CD14-positive monocyte (primary cell): ENCODE measurements at regions of chr4 and their contacts with region 1.

Region 1: DNA sequence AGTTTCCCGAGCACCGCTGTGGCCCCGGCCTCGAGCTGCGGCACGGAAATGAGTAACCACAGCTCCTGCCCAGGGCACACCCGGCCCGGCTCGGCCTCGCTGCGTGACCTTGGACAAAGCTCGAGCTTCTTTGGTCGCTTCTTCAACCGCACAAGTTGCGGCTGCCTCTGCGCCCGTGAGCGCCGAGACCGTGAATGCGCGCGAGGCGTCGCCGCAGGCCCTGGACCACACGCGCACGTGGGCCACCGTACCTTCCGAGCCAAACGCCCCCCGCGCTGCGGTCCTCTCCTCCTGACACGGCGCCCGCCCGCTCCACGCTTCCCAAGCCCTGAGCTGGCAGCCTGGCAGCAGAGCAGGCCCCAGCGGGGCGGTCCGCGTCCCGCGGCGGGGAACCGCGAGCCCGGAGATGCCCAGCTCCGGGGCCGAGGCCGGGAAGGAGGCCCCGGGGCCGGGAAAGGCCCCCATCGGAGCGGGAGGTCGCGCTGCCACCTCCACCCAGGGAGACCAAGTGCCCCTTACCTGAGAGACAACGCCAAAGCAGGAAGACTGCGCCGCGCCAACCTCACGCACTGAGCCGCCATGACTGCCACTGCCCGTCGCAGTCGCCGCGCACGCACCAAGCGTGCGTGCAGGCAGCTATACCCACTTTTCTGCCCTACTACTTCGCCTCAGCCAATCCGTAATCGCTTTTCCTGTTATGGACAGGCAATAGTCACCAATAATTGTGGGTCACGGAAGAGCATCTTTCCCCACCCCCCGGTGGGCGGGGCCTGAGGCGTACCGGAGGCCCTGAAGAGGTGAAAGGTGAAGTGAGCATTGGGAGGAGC is at the start of gene GRPEL1:
- DNase-seq: peak; percentile 99 to 100 (median 100)
- H3K4me3 ChIP-seq: peak within 1 kb of the TSS; percentile 70 to 83 (median 79)
- H3K4me3 Mint-ChIP-seq: peak within 1 kb of the TSS; percentile 91 to 98
- H3K27ac ChIP-seq: peak within 1 kb of the TSS; percentile 83 to 94
- H3K27ac Mint-ChIP-seq: peak within 1 kb of the TSS; percentile 90 to 98 (median 96)
- H3K4me1 ChIP-seq: peaks cover 37 to 46% of the 10 kb centered on the region in 2 donors
- H3K4me1 Mint-ChIP-seq: peaks cover 39% of the 10 kb centered on the region
- H3K27me3 ChIP-seq: peaks cover 0 to 18% of the 10 kb centered on the region in 2 donors
- H3K27me3 Mint-ChIP-seq: peaks cover 12 to 24% (median 20%) of the 10 kb centered on the region in 3 donors
- CTCF ChIP-seq: no peak
- polyA plus RNA-seq, gene GRPEL1: 44.1 to 49.6 (median 45.4) TPM

Region 2: DNA sequence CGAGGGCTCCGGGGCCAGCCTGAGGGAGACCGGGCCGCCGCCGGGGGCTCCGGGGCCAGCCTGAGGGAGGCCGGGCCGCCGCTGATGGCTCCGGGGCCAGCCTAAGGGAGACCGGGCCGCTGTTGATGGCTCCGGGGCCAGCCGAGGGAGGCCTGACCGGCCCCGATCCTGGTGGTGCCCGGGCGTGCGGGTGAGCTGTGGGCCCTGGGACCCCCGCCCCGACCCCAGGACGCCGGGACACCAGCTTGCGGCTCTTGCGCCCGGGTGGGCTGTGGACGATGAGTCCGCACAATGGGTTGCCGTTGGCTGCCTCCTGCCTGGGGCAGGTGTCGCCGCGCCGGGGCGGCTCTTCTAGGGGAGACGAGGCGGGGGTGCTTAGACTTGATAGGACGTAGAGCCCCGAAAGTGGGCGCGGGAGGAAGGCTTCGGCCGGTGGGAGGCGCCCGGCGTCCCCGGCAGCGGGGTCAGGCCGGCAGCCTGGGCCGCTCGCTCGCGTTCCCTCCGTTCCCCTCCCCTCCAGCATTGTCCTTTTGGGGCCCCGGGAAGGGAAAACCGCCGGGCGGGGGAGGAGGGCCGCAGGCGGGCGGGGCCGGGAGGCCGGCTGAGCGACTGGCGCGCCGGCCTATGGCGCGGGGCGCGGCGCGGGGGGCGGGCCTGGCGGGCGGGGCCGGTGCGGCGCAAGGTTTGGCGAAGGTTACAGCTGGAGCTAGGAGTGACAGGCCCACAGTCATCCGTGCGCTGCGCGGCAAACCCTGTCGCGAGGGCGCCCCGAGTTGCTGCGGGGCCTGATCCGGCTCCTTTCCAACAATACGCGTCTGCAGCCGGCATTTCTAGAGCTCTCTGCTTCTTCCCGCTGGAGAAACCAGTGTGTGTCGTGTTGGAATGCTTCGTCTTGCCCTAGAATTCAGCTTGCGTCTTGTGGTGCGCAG is 284.3 kb before region 1 on chr4:
- intact Hi-C with region 1: loop called in 1 of 2 experiments (anchors 10 kb)
- DNase-seq: peak; percentile 75 to 81 (median 79)
- H3K4me3 ChIP-seq: peak overlapping the region; percentile 75 to 98 (median 81)
- H3K4me3 Mint-ChIP-seq: peak overlapping the region; percentile 84 to 88
- H3K27ac ChIP-seq: peak overlapping the region; percentile 88 to 92
- H3K27ac Mint-ChIP-seq: peak overlapping the region; percentile 76 to 92 (median 91)
- H3K4me1 ChIP-seq: peaks cover 30 to 46% of the 10 kb centered on the region in 2 donors
- H3K4me1 Mint-ChIP-seq: peaks cover 58% of the 10 kb centered on the region
- H3K27me3 ChIP-seq: no peaks in the 10 kb centered on the region
- H3K27me3 Mint-ChIP-seq: peaks cover 0 to 4% (median 2%) of the 10 kb centered on the region in 3 donors
- CTCF ChIP-seq: no peak

Region 3: GRCh38 chr4:6917461-6918271 is 150.0 kb before region 1 on chr4:
- intact Hi-C with region 1: loop called in 1 of 2 experiments (anchors 10 kb)
- DNase-seq: peak; percentile 81 to 93 (median 90)
- H3K4me3 ChIP-seq: peak overlapping the region in 1 of 3 experiments; percentile 55
- H3K4me3 Mint-ChIP-seq: peak overlapping the region; percentile 40 to 83
- H3K27ac ChIP-seq: peak overlapping the region; percentile 48 to 77
- H3K27ac Mint-ChIP-seq: peak overlapping the region; percentile 89 to 95 (median 93)
- H3K4me1 ChIP-seq: peaks cover 53 to 59% of the 10 kb centered on the region in 2 donors
- H3K4me1 Mint-ChIP-seq: peaks cover 74% of the 10 kb centered on the region
- H3K27me3 ChIP-seq: no peaks in the 10 kb centered on the region
- H3K27me3 Mint-ChIP-seq: peaks cover 0 to 2% (median 2%) of the 10 kb centered on the region in 3 donors
- CTCF ChIP-seq: peak; percentile 87

Region 4: DNA sequence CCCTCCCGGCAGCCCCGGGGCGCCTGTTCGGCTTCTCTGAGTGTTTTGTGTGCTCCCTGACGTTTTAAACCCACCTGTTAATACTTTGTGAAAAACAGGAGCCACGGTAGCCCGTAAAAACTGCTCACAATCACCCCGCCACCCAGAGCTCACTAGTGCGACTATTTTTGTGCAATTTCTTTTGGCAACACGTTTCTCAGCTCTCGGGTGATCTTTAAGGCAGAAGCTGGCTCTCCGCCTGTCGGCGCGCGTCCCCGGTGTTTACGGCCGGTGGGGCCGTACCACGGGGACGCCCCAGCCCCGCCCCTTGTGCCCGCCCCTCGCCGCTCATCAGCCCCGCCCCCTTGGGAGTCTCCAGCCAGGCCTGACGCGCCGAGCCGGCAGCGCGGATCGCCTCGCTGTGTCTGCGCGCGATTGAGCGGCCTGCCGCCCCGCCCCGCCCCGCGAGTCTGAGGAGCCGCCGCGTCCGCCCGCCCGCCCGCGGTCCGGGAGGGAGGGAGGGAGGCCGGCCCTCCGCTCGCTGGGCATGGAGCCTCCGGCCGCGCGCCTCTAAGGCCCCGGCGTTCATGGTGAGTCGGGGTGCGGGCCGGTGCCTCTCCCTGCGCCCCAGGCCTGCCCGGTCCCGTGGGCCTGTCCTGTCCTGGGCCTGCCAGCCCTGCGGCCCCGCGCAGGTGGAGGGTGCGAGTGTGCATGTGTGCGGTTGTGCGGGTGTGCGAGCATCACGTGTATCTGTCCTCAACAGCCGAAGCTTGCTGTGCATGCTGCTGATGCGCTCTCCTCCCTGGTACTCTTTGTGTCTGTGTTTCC is 80.7 kb before region 1 on chr4:
- intact Hi-C with region 1: loop called (anchors 2 to 5 kb)
- DNase-seq: peak; percentile 90 to 91 (median 90)
- H3K4me3 ChIP-seq: peak overlapping the region; percentile 57 to 80 (median 69)
- H3K4me3 Mint-ChIP-seq: peak overlapping the region; percentile 92 to 94
- H3K27ac ChIP-seq: peak overlapping the region; percentile 79 to 81
- H3K27ac Mint-ChIP-seq: peak overlapping the region; percentile 91 to 98 (median 97)
- H3K4me1 ChIP-seq: peaks cover 71 to 80% of the 10 kb centered on the region in 2 donors
- H3K4me1 Mint-ChIP-seq: peaks cover 81% of the 10 kb centered on the region
- H3K27me3 ChIP-seq: no peaks in the 10 kb centered on the region
- H3K27me3 Mint-ChIP-seq: peaks cover 0 to 3% (median 2%) of the 10 kb centered on the region in 3 donors
- CTCF ChIP-seq: no peak

Region 5: DNA sequence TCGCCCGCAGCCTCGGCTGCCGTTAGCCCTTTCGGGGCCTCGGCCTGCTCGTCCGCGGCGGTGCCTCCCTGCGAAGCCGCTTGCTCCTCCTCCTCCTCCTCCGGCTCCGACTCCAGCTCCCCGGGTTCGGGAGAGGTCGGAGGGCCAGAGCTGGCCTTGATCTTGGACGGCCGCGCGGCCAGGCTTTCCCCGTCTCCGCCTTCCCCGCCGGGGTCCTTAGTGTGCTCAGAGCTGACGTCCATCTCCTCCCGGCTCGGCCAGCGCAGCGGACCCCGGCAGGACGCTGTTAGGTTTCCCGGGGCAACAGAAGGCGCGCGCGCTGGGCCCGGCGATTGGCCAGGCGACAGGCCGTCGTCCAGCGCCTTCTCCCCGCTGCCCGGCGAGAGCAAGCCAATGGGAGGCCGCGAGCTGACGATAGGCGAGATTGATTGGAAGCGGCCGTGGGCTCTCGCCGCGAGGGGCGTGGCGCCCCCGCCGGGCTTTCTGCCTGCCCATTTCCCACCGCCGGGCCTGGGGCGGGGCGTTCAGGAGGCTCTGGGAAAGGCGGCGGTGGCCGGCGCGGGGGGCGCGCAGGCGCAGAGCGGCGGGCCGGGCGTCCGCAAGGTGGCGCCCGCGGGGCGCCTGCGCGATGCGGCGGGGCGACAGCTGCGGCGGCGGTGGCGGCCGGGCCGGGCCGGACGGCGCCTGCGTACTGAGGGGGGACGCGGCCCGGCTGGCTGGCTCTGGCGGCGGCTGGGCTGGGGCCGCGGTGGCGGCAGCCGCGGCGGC is 24.8 kb before region 1 on chr4 and contains the start of gene TADA2B:
- intact Hi-C with region 1: loop called (anchors 1 kb)
- DNase-seq: peak; percentile 97 to 98 (median 97)
- H3K4me3 ChIP-seq: peak within 1 kb of the TSS; percentile 84 to 92 (median 87)
- H3K4me3 Mint-ChIP-seq: peak within 1 kb of the TSS; percentile 89 to 97
- H3K27ac ChIP-seq: peak within 1 kb of the TSS; percentile 76 to 88
- H3K27ac Mint-ChIP-seq: peak within 1 kb of the TSS; percentile 81 to 95 (median 90)
- H3K4me1 ChIP-seq: peaks cover 39 to 52% of the 10 kb centered on the region in 2 donors
- H3K4me1 Mint-ChIP-seq: peaks cover 59% of the 10 kb centered on the region
- H3K27me3 ChIP-seq: no peaks in the 10 kb centered on the region
- H3K27me3 Mint-ChIP-seq: peaks cover 0 to 10% (median 3%) of the 10 kb centered on the region in 3 donors
- CTCF ChIP-seq: peak; percentile 21
- polyA plus RNA-seq, gene TADA2B: 2.0 to 10.2 (median 2.6) TPM

Region 6: DNA sequence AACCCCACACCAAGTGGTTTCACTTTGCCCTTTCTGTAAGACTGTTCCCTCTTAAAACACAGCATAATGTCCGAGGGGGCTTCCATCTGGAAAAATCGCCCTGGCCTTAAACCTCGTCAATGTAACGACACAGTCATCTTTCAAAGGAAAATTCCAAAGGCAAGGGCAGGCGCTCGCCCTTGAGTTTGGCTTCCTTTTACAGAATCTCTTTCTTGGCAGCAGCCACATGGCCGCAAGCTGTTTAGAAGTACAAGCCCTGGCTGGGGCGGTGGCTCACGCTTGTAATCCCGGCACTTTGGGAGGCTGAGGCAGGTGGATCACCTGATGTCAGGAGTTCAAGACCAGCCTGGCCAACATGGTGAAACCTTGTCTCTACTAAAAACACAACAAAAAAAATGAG is 27.3 kb after region 1 on chr4:
- intact Hi-C with region 1: no loop called
- DNase-seq: no peak
- H3K4me3 ChIP-seq: no peak overlapping the region
- H3K4me3 Mint-ChIP-seq: peak overlapping the region in 1 of 2 donors; percentile 26
- H3K27ac ChIP-seq: no peak overlapping the region
- H3K27ac Mint-ChIP-seq: no peak overlapping the region
- H3K4me1 ChIP-seq: no peaks in the 10 kb centered on the region
- H3K4me1 Mint-ChIP-seq: no peaks in the 10 kb centered on the region
- H3K27me3 ChIP-seq: peaks cover 0 to 9% of the 10 kb centered on the region in 2 donors
- H3K27me3 Mint-ChIP-seq: peaks cover 16 to 24% (median 21%) of the 10 kb centered on the region in 3 donors
- CTCF ChIP-seq: no peak

Region 7: GRCh38 chr4:7110546-7110945 is 42.9 kb after region 1 on chr4:
- intact Hi-C with region 1: no loop called
- DNase-seq: no peak
- H3K4me3 ChIP-seq: no peak overlapping the region
- H3K4me3 Mint-ChIP-seq: no peak overlapping the region
- H3K27ac ChIP-seq: no peak overlapping the region
- H3K27ac Mint-ChIP-seq: no peak overlapping the region
- H3K4me1 ChIP-seq: no peaks in the 10 kb centered on the region
- H3K4me1 Mint-ChIP-seq: no peaks in the 10 kb centered on the region
- H3K27me3 ChIP-seq: no peaks in the 10 kb centered on the region
- H3K27me3 Mint-ChIP-seq: peaks cover 5 to 12% (median 5%) of the 10 kb centered on the region in 3 donors
- CTCF ChIP-seq: no peak